Cardiac septum (tissue), 1 donor: ENCODE measurements at regions of chr21 and their contacts with region 1.

Region 1: DNA sequence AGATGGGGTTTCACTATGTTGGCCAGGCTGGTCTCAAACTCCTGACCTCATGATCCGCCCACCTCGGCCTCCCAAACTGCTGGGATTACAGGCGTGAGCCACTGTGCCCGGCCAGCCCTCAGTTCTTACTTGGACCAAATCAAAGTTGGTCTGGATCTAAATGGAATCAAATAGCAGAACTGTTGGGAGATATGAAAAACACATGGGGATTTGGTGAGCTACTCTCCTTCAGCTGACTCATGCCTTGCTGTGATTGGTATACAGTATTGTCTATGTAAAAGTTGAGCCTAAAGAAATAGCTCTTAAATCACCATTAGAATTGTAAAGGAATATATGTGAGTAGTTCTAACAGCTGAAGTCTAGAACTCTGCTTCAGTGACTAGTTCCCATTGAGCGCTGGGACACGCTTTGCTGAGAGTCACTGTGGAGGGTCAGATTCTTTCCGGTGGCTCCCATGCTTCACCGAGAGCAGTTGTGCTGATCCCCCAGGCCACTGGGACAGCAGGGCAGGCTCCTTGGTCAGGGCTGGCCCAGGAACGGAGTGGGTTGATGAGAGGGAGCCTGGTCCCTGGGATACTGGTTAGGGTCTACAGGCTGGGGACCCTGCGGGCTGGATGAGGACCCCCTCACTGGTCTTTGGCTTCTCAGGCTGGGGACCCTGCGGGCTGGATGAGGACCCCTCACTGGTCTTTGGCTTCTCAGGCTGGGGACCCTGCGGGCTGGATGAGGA is 14.0 kb downstream of the PKNOX1 start:
- DNase-seq: no peak

Region 2: GRCh38 chr21:42905195-42905594 is 83.2 kb before region 1 on chr21:
- intact Hi-C with region 1: no loop called
- DNase-seq: no peak

Region 3: DNA sequence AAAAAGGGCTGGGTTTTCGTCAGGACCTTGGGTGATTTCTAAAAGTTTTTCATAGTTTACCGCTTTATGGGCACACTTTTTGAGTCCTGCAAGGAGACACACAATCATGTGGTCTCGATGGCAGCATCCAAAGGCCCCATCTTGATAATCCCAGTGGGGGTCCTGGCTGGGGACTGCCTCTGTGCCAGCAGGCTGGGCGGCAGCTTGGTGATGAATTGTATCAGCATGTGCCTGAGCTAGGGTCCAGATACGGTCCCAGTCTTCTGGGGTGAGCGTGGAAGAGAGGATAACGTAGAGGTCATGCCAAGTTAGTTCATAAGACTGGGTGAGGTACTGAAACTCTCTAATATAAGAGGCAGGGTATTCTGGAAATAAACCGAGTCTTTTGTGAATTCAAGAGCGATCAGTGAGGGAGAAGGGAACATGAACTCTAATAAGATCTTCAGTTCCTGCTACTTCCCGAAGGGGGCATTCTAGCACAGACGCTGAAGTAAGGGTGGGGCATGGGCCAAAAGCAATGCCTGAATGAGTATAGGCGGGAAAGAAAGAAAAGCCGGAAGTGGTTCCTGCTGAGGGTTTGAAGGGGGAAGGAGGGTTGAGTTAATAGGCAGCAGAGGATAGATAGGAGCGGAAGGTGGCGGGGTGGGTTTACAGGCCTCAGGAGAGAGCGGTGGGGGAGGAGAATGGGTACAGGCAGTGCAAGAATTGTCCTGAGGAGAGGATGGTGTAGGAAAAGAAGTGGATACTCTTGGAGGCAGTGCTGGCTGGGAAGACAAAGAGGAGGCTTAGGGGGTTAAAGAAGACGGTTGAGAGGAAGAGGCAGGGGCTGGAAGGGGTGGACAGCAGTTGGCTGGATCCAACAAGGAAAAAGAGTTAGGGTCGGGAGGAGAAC is 64.6 kb before region 1 on chr21:
- intact Hi-C with region 1: loop called (anchors 10 kb)
- DNase-seq: peak; percentile 75

Region 4: GRCh38 chr21:43667191-43667904 is 678.9 kb after region 1 on chr21:
- intact Hi-C with region 1: loop called (anchors 10 kb)
- DNase-seq: no peak